ENCODE measurements at regions of chr4 and their contacts with region 1.

Region 1: DNA sequence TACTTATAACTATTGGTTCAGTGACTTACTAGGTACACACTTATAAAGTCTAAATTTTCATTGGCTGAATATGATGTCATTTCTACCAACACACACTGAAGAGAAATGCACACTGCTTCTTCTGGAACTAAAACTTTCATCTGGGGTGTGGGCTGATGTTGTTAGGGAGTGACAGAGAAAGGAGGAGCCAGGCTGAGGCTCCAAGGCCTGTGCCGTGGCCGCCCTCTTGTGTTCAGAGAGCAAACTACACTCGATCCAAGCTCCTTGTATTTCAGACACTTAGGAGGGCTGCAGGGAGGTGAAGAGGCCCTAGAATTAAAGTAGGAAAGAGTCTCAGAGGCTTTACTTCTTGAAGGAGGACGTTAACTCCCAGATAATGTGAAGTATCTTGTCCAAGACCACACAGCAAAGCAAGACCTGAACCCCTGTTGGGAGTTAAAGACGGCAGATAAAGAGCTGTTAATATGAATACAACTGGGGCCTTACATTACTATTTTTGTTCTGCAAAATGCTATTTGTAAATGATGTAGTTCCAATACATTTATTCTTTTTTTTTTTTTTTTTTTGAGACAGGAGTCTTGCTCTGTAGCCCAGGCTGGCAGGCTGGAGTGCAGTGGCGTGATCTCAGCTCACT is 137.5 kb downstream of the AFAP1 start:
- DNase-seq: peak; percentile 79
- ATAC-seq: peak; percentile 59
- H3K4me3 ChIP-seq: no peak overlapping the region
- H3K27ac ChIP-seq: no peak overlapping the region
- H3K4me1 ChIP-seq: peaks cover 31% of the 10 kb centered on the region
- H3K27me3 ChIP-seq: no peaks in the 10 kb centered on the region
- CTCF ChIP-seq: peak; percentile 83

Region 2: DNA sequence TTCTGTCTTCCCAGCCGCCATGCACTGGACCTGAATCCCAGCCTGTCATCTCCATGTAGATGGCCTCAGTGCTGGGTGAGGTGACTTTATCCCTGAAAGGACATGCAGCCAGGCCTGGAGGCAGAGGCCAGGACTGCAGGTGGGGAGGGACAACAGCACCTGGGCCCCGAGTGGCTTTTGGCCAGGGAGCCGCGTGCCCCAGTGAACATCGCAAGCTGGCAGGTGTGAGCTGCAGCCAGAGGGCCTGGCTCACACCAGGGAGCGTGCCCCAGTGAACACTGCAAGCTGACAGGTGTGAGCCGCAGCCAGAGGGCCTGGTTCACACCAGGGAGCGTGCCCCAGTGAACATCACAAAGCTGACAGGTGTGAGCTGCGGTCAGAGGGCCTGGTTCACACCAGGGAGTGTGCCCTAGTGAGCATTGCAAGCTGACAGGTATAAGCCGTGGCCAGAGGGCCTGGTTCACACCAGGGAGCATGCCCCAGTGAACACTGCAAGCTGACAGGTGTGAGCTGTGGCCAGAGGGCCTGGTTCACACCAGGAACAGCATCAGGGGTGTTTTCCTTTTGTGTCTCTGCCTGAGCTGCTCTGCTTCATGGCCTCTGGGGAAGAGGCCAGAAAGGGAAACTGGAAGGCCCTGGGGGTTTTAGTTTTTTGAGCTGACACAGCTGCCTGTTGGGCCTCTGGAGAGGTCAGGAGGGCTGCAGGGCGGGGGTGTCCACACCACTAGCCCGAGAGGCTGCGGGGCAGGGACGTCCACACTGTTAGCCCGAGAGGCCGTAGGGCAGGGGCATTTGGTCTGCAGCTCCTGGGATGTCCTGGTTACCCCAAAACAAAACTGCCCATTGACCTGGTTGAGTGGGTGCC is 344.8 kb before region 1 on chr4:
- CTCF ChIA-PET with region 1: no interaction called
- POLR2A ChIA-PET with region 1: no interaction called
- intact Hi-C with region 1: no loop called
- DNase-seq: no peak
- ATAC-seq: no peak
- H3K4me3 ChIP-seq: no peak overlapping the region
- H3K27ac ChIP-seq: no peak overlapping the region
- H3K4me1 ChIP-seq: peaks cover 7% of the 10 kb centered on the region
- H3K27me3 ChIP-seq: no peaks in the 10 kb centered on the region
- CTCF ChIP-seq: no peak

Region 3: GRCh38 chr4:7719354-7720174 is 82.6 kb before region 1 on chr4:
- CTCF ChIA-PET with region 1: interaction called, 3 read pairs
- POLR2A ChIA-PET with region 1: no interaction called
- intact Hi-C with region 1: loop called (anchors 2 kb)
- DNase-seq: peak; percentile 54
- ATAC-seq: peak; percentile 77
- H3K4me3 ChIP-seq: peak overlapping the region; percentile 28; the same call in 1 of the 2 replicates
- H3K27ac ChIP-seq: no peak overlapping the region
- H3K4me1 ChIP-seq: 0 out of 2 replicates have a peak, but pooled peaks cover 3% of the 10 kb centered on the region
- H3K27me3 ChIP-seq: no peaks in the 10 kb centered on the region
- CTCF ChIP-seq: peak; percentile 79

Region 4: DNA sequence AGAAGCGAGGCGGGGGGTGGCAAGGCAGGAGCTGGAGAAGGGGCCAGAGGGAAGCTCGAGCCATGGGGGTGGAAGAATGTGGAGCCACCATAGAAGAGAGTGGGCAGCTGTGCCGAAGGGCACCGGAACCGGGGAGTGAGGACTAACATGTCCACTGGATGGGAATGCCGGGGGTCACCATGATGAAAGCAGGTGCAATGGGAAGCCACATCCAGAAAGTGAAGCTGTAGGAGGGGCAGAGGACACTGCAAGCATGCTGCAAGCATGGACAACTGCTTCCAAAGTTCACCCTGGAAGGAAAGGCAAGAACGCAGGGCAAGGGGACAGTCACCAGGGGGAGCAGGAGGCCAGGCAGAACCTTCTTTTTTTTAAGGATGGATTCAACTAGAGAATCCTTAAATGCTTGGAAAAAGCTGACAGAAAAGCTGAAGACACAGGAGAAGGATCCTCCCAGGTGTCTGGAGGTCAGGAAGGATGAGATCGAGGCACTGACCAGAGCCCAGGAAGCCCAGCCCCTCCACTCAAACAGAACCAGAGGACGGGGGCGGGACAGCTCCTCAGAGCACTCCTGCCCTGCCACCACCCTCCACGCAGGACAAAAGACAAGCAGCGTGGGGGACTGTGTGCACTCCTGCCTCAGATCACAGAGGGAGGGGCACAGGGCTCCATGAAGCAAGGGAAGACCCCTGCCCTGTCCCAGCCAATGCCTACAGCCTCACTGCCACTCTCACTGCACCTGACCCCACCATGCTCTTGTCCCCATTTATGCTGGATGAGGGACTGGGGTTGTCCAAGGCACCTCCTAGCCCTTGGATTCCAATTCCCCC is 31.8 kb before region 1 on chr4:
- CTCF ChIA-PET with region 1: no interaction called
- POLR2A ChIA-PET with region 1: no interaction called
- intact Hi-C with region 1: loop called (anchors 1 kb)
- DNase-seq: peak; percentile 15
- ATAC-seq: no peak; the same call in 1 of the 2 replicates
- H3K4me3 ChIP-seq: no peak overlapping the region
- H3K27ac ChIP-seq: no peak overlapping the region
- H3K4me1 ChIP-seq: no peaks in the 10 kb centered on the region
- H3K27me3 ChIP-seq: no peaks in the 10 kb centered on the region
- CTCF ChIP-seq: peak; percentile 52

Region 5: DNA sequence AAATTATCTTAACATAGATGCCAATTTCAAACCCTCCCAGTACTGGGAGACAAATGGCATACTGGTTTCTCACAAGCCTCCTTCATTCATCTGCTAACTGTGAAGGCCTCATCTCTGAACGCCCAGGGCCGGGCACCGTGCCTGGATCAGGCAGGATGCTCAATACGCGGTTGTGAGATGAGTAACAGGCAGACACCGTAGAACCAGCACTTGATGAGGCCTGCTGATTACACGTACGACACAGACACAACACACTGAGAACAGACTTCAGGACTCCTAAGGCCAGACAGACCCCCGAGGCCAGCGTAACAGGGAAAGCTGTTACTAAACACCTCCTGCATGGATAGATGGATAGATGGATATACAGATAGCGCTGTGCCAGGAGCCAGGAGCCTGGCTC is 17.2 kb before region 1 on chr4:
- CTCF ChIA-PET with region 1: no interaction called
- POLR2A ChIA-PET with region 1: no interaction called
- intact Hi-C with region 1: no loop called
- DNase-seq: no peak
- ATAC-seq: no peak
- H3K4me3 ChIP-seq: no peak overlapping the region
- H3K27ac ChIP-seq: no peak overlapping the region
- H3K4me1 ChIP-seq: no peaks in the 10 kb centered on the region
- H3K27me3 ChIP-seq: no peaks in the 10 kb centered on the region
- CTCF ChIP-seq: no peak

Region 6: DNA sequence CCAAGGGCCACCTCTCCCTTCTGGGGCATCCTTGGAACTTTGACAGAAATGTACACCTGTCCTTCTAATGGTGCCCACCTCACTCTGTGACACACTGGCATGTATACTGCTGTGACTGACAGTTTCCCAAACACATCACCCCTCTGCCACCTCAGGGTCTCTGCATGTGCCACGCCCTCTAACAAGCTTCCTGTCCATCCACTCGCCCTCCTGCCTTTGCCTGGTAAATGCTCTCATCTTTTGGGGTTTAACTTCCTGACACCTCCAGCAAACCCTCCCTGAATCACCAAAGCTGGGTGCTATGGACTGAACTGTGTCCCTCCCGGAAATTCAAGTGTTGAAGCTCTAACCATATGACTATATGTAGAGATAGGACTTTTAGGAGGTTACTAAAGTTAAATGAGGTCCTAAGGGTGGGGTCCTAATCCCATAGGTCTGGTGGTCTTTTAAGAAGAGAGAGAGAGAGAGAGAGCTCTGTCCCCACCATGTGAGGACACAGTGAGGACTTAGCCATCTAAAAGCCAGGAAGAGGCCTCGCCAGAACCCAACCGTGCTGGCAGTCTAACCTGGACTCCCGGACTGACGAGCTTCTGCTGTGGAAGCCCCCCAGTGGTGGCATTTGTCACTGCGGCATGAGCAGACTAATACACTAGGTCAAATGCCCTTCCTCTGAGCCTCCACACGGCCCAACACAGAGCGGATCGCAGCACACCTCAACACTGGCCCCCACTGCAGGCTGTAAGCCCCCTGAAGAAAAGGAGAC is 41.8 kb after region 1 on chr4:
- CTCF ChIA-PET with region 1: interaction called, 3 read pairs
- POLR2A ChIA-PET with region 1: no interaction called
- intact Hi-C with region 1: loop called (anchors 1 kb)
- DNase-seq: peak; percentile 82
- ATAC-seq: peak; percentile 72
- H3K4me3 ChIP-seq: peak overlapping the region; percentile 45; the same call in 1 of the 2 replicates
- H3K27ac ChIP-seq: peak overlapping the region; percentile 96
- H3K4me1 ChIP-seq: peaks cover 44% of the 10 kb centered on the region
- H3K27me3 ChIP-seq: no peaks in the 10 kb centered on the region
- CTCF ChIP-seq: peak; percentile 67

Region 7: DNA sequence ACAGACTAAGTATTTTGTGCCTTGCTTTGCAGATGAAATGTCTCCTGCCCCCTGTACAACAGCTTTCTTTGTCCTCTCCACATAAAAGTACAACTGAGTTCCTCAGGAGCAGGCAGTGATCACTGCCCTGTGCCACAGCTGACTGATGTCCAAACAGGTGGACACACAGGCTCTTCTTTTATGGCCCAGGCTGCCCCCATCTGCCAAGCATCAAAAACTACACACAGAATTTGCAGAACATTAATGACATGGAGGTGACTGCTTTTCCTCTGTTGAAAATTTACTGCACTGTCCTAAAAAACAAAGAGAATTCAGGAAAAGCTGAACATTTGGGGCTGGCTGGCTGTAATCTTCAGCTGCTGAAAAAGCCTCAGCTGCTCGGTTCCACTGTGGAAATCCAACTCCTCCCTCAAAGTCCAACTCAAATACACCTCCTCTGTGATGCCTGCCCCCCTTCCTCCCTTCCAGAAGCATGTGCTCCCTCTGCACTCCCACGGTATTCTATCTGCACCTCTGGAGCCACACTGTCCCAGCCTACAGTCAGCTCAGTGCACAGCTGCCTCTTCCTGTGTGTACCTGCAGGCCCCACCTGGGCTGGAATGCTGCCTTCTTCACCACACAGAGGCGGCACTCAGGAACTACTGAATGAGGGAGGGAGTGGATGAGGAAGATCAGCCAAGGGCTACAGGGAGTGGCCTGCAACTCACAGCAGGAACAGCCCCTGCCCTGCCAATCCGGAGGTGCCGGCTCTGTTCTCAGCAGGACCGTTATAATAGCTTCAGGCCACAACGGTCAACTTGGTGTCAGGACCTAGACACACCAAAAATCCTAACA is 127.1 kb after region 1 on chr4:
- CTCF ChIA-PET with region 1: interaction called, 3 read pairs
- POLR2A ChIA-PET with region 1: no interaction called
- intact Hi-C with region 1: loop called (anchors 1 kb)
- DNase-seq: peak; percentile 79
- ATAC-seq: peak; percentile 92
- H3K4me3 ChIP-seq: 0 out of 2 replicates have a peak overlapping the region, but pooled peaks have one; percentile 5
- H3K27ac ChIP-seq: peak overlapping the region; percentile 15
- H3K4me1 ChIP-seq: peaks cover 31% of the 10 kb centered on the region
- H3K27me3 ChIP-seq: no peaks in the 10 kb centered on the region
- CTCF ChIP-seq: peak; percentile 57

Region 8: GRCh38 chr4:7987148-7987989 is 185.2 kb after region 1 on chr4:
- CTCF ChIA-PET with region 1: interaction called, 11 read pairs
- POLR2A ChIA-PET with region 1: no interaction called
- intact Hi-C with region 1: loop called (anchors 1 kb)
- DNase-seq: peak; percentile 86
- ATAC-seq: peak; percentile 81
- H3K4me3 ChIP-seq: no peak overlapping the region
- H3K27ac ChIP-seq: peak overlapping the region; percentile 66
- H3K4me1 ChIP-seq: peaks cover 15% of the 10 kb centered on the region
- H3K27me3 ChIP-seq: no peaks in the 10 kb centered on the region
- CTCF ChIP-seq: peak; percentile 86

Region 9: DNA sequence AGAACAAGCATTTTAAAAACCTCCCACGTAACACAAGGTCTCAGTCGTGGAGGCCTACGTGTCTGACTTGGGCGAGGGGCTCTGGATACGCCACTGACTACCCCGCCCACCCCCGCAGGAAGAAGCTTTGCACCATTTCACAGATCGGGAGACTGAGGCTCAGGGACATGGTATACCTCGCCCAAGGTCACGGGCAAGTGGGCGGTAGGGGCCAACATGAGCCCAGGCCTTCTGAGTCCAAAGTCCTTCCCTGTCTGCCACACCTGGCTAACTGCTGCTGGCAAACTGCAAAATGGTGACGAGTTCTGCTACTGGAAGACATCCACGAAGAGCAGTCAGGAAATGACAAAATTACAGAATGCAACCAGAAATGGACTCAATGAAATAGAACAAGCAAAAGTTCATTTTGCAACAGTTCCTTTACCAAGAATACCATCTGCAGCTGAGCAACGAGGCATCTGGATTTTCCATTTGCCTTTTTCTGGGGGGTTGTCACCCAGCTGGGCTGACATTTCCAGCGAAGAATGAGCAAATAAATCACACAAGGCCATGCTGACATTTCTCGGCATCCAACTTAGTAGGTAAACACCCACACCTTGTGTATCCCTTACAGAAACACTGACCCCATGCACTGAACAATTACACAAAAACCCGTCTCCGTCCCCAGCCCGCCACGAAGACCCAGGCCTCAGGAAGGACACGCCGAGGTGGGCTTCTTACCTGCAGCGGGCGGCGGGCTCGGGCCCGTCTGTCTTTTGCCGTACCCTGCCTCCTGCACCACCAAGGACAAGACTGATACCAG is 207.7 kb after region 1 on chr4:
- CTCF ChIA-PET with region 1: no interaction called
- POLR2A ChIA-PET with region 1: no interaction called
- intact Hi-C with region 1: no loop called
- DNase-seq: no peak
- ATAC-seq: no peak
- H3K4me3 ChIP-seq: no peak overlapping the region
- H3K27ac ChIP-seq: no peak overlapping the region
- H3K4me1 ChIP-seq: no peaks in the 10 kb centered on the region
- H3K27me3 ChIP-seq: no peaks in the 10 kb centered on the region
- CTCF ChIP-seq: no peak

Measured in PC-3 (cell line).